Endothelial cell of umbilical vein (primary cell): ENCODE measurements at regions of chr5 and their contacts with region 1.

Region 1: GRCh38 chr5:76742583-76742982 is 26.7 kb downstream of the F2R start:
- DNase-seq: no peak
- H3K4me3 ChIP-seq: no peak overlapping the region
- H3K27ac ChIP-seq: no peak overlapping the region
- H3K4me1 ChIP-seq: peaks cover 14% of the 10 kb centered on the region
- H3K27me3 ChIP-seq: no peaks in the 10 kb centered on the region
- CTCF ChIP-seq: no peak
- POLR2A ChIP-seq: no peak

Region 2: DNA sequence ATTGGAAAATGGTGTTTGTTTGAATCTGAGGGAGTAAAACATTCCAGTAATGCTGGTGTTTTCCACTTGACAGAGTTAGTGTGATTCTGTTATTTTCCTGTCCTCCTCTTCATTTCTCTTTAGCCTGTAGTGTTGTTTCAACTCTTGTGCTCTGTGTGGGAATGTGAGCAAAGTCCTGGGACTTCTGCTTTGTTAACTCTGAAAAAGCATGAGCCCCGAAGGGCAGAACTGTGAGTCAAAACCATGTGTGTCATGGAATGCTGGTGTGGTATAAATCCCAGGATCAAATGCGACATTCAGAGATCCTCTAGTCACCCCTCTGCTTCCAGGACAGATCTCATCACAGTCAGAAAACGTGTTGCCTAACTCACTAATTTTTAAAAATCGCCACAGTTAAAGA is 17.7 kb before region 1 on chr5:
- CTCF ChIA-PET with region 1: interaction called, 7 read pairs
- POLR2A ChIA-PET with region 1: interaction called, 10 read pairs
- dilution Hi-C with region 1: no loop called
- intact Hi-C with region 1: no loop called
- DNase-seq: no peak
- H3K4me3 ChIP-seq: no peak overlapping the region
- H3K27ac ChIP-seq: peak overlapping the region; percentile 12
- H3K4me1 ChIP-seq: peaks cover 29% of the 10 kb centered on the region
- H3K27me3 ChIP-seq: no peaks in the 10 kb centered on the region
- CTCF ChIP-seq: no peak
- POLR2A ChIP-seq: no peak